Psoas muscle (tissue), 8 donors: ENCODE measurements at regions of chr14 and their contacts with region 1.

Region 1: GRCh38 chr14:59320763-59321640 is 132.5 kb downstream of the DAAM1 start:
- DNase-seq: no peak
- ATAC-seq: peak in 2 of 4 donors; percentile 21 to 44
- H3K4me3 ChIP-seq: no peak overlapping the region
- H3K27ac ChIP-seq: peak overlapping the region; percentile 12
- H3K4me1 ChIP-seq: peaks cover 18% of the 10 kb centered on the region
- H3K27me3 ChIP-seq: no peaks in the 10 kb centered on the region
- CTCF ChIP-seq: no peak

Region 2: GRCh38 chr14:59189786-59190771 is 130.9 kb before region 1 on chr14:
- intact Hi-C with region 1: loop called in 1 of 2 experiments (anchors 5 kb)
- DNase-seq: peak; percentile 83 to 89
- ATAC-seq: peak; percentile 31 to 57 (median 47)
- H3K4me3 ChIP-seq: peak overlapping the region; percentile 83
- H3K27ac ChIP-seq: peak overlapping the region; percentile 87
- H3K4me1 ChIP-seq: peaks cover 28% of the 10 kb centered on the region
- H3K27me3 ChIP-seq: no peaks in the 10 kb centered on the region
- CTCF ChIP-seq: no peak

Region 3: GRCh38 chr14:59428581-59429012 is 107.6 kb after region 1 on chr14:
- intact Hi-C with region 1: no loop called
- DNase-seq: no peak
- ATAC-seq: peak in 1 of 4 donors; percentile 15
- H3K4me3 ChIP-seq: no peak overlapping the region
- H3K27ac ChIP-seq: peak overlapping the region; percentile 47
- H3K4me1 ChIP-seq: peaks cover 8% of the 10 kb centered on the region
- H3K27me3 ChIP-seq: no peaks in the 10 kb centered on the region
- CTCF ChIP-seq: peak; percentile 21